ENCODE measurements at regions of chrX and their contacts with region 1.

Region 1: DNA sequence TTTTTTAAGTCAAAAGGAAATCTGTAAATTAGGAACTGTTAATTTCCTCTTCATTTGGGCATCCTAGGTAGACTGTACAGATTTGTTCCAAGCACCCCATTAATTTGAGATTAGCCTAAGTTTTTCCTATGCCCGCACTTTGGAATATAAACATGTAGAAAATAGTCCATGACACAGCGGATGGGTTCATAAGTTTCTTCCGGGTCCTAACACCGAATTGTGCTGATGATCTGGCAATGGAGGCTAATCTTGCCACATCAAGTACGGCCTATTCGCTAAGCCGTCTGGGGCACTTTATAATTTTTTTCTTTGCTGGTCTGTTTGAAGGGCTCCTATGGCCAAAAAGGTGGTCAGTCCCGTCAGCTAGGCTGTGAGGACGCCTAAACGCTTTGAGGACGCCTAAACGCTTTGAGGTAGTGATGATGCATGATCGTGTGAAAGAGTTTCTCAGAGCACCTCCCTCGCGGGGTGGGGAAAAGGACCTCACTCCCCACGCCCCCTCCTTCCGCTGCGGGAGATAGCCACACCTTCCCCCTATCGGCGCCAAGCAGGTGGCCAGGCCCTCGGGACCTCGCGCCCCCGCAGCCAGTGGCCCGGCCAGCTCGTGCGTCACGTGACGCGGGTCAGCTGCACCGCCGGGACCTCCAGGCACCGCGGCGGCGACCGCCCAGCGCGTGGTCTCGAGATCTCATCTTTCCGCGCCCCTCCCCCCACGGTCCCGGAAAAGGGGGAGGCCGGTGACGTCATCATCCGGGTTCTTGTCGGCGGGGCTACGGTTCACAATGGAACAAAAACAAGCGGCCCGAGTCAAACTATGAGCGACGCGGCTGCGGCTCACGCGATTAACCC is 977 bp upstream of the USP9X start:
- DNase-seq: peak; percentile 87
- H3K4me3 ChIP-seq: peak overlapping the region; percentile 75
- H3K27ac ChIP-seq: peak overlapping the region; percentile 100
- H3K27me3 ChIP-seq: no peaks in the 10 kb centered on the region
- CTCF ChIP-seq: no peak

Region 2: DNA sequence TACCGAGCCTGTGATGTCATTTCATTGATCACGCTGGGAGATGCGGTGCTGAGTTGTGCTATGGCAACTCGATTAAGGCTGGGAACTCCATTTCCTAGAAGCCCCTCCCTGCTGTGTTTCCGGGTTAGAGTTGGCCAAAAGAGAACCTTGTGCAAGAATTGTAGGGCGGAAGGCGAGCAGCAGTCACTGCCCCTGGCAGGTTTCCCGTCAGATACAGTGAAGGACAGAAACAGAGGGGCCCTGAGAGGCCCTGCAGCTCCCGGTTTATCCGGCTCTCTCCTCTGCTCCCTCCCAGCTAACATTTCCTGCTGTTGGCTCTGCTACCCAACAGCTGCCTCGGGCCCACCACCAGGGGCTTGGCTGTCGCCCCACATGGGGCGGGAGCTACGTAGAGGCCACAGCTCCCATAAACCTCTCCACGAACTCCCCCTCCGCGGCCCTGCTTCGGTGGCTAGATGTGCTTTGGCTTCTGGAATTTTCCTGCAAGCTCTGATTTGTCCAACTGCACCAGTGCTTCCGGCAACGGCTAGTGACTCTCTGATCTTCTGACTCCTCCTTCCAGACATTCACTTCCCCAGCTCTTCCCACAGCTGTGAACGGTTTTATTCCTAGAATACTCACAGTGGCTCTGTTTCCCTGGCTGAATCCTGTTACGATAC is 74.0 kb before region 1 on chrX:
- CTCF ChIA-PET with region 1: no interaction called
- POLR2A ChIA-PET with region 1: interaction called, 11 read pairs
- DNase-seq: peak; percentile 63
- H3K4me3 ChIP-seq: peak overlapping the region; percentile 41
- H3K27ac ChIP-seq: peak overlapping the region; percentile 96
- H3K27me3 ChIP-seq: no peaks in the 10 kb centered on the region
- CTCF ChIP-seq: peak; percentile 22; the same call in 1 of the 2 replicates

Region 3: GRCh38 chrX:41027431-41027831 is 56.8 kb before region 1 on chrX:
- CTCF ChIA-PET with region 1: no interaction called
- POLR2A ChIA-PET with region 1: interaction called, 12 read pairs
- DNase-seq: peak; percentile 38
- H3K4me3 ChIP-seq: no peak overlapping the region
- H3K27ac ChIP-seq: no peak overlapping the region
- H3K27me3 ChIP-seq: no peaks in the 10 kb centered on the region
- CTCF ChIP-seq: no peak

Region 4: GRCh38 chrX:41064028-41064427 is 20.2 kb before region 1 on chrX:
- CTCF ChIA-PET with region 1: no interaction called
- POLR2A ChIA-PET with region 1: no interaction called
- DNase-seq: no peak
- H3K4me3 ChIP-seq: no peak overlapping the region
- H3K27ac ChIP-seq: no peak overlapping the region
- H3K27me3 ChIP-seq: no peaks in the 10 kb centered on the region
- CTCF ChIP-seq: no peak

Region 5: GRCh38 chrX:41236629-41237028 is 152.4 kb after region 1 on chrX:
- CTCF ChIA-PET with region 1: no interaction called
- POLR2A ChIA-PET with region 1: no interaction called
- DNase-seq: no peak
- H3K4me3 ChIP-seq: no peak overlapping the region
- H3K27ac ChIP-seq: no peak overlapping the region
- H3K27me3 ChIP-seq: no peaks in the 10 kb centered on the region
- CTCF ChIP-seq: no peak